CD8-positive, alpha-beta memory T cell (primary cell): ENCODE measurements at regions of chrX and their contacts with region 1.

Region 1: DNA sequence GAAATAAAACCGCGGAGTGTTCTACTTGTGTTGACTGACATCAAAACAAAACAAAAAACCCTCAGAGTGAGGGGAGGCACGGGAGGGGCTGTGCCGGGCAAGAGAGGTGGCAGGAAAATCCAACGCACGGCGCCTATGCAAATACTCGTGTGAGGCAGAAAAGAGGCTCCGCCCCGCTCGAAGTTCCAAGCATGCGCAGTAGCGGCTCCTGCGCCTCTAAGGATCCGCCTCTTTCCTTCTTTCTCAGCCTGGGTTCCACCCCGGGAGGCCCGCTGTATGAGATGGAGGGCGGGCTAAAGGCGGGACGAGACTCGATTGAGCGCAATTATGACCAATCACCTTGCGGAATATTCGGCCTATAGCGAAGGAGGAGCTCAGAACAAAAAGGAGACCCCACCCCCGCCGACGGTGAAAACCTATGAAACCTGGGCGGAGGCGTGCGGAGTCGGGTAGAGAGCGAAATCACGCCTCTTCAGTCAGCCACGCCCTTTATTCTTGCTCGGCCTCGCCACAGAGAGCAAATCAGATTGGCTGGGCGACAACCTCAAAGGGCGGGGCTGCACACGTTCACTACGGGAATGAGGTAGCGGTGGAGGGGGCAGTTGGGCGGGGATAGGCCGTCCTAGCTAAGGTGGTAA is 720 bp upstream of the CDK16 start:
- DNase-seq: peak; percentile 90 to 100 (median 98)
- H3K4me3 ChIP-seq: peak overlapping the region; percentile 78
- H3K4me3 Mint-ChIP-seq: peak overlapping the region; percentile 89 to 97 (median 96)
- H3K27ac ChIP-seq: peak overlapping the region; percentile 93
- H3K27ac Mint-ChIP-seq: peak overlapping the region; percentile 96 to 100 (median 99)
- H3K4me1 ChIP-seq: peaks cover 20% of the 10 kb centered on the region
- H3K4me1 Mint-ChIP-seq: peaks cover 37 to 48% (median 37%) of the 10 kb centered on the region in 3 donors
- H3K27me3 ChIP-seq: no peaks in the 10 kb centered on the region
- H3K27me3 Mint-ChIP-seq: peaks cover 0 to 2% of the 10 kb centered on the region in 2 donors

Region 2: GRCh38 chrX:47097018-47097417 is 120.7 kb before region 1 on chrX:
- CTCF ChIA-PET with region 1: no interaction called
- POLR2A ChIA-PET with region 1: no interaction called
- DNase-seq: no peak
- H3K4me3 ChIP-seq: no peak overlapping the region
- H3K4me3 Mint-ChIP-seq: no peak overlapping the region
- H3K27ac ChIP-seq: no peak overlapping the region
- H3K27ac Mint-ChIP-seq: no peak overlapping the region
- H3K4me1 ChIP-seq: no peaks in the 10 kb centered on the region
- H3K4me1 Mint-ChIP-seq: peaks cover 0 to 4% (median 0%) of the 10 kb centered on the region in 3 donors
- H3K27me3 ChIP-seq: no peaks in the 10 kb centered on the region
- H3K27me3 Mint-ChIP-seq: peaks cover 0 to 21% of the 10 kb centered on the region in 2 donors

Region 3: DNA sequence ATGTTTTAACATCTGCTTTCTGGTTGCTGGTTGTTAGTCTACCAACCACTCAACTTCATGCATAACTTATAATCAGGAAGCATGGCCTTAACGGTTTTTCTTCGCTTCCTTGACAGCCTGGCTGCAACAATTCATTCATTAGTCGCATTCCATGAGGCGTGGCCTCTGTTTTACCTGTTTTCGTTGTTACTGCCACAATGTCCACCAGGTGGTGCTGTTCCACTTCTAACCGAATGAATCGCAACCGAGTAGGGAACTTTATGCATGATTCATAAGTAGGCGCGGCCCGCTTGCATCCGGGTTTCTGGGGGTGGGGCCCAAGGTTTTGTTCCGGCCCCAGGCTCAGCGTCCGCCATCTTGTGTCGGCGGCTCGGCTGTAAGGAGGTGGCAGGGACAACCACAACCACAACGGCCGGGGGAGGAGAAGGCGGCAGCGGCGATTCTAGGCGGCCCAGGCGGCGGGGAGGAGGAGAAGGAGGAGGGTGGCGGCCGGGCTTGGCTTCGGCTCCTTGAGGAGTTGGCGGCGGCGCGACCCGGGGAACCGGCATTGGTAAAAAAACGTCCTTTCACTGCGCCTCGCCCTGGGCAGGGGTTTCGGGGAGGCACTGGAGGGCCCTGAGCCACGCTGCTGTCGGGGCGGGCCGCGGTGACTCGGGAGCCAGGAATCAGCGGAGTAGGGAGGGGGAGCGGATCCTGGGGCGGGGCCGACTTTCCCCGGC is 24.1 kb before region 1 on chrX and contains the start of gene UBA1:
- CTCF ChIA-PET with region 1: interaction called, 3 read pairs
- POLR2A ChIA-PET with region 1: interaction called, 11 read pairs
- DNase-seq: peak; percentile 84 to 97 (median 95)
- H3K4me3 ChIP-seq: peak within 1 kb of the TSS; percentile 74
- H3K4me3 Mint-ChIP-seq: peak within 1 kb of the TSS; percentile 91 to 100 (median 98)
- H3K27ac ChIP-seq: peak within 1 kb of the TSS; percentile 84
- H3K27ac Mint-ChIP-seq: peak within 1 kb of the TSS; percentile 88 to 100 (median 99)
- H3K4me1 ChIP-seq: peaks cover 46% of the 10 kb centered on the region
- H3K4me1 Mint-ChIP-seq: peaks cover 62 to 77% (median 65%) of the 10 kb centered on the region in 3 donors
- H3K27me3 ChIP-seq: no peaks in the 10 kb centered on the region
- H3K27me3 Mint-ChIP-seq: no peaks in the 10 kb centered on the region
- total RNA-seq, gene UBA1: 225 to 234 TPM

Region 4: DNA sequence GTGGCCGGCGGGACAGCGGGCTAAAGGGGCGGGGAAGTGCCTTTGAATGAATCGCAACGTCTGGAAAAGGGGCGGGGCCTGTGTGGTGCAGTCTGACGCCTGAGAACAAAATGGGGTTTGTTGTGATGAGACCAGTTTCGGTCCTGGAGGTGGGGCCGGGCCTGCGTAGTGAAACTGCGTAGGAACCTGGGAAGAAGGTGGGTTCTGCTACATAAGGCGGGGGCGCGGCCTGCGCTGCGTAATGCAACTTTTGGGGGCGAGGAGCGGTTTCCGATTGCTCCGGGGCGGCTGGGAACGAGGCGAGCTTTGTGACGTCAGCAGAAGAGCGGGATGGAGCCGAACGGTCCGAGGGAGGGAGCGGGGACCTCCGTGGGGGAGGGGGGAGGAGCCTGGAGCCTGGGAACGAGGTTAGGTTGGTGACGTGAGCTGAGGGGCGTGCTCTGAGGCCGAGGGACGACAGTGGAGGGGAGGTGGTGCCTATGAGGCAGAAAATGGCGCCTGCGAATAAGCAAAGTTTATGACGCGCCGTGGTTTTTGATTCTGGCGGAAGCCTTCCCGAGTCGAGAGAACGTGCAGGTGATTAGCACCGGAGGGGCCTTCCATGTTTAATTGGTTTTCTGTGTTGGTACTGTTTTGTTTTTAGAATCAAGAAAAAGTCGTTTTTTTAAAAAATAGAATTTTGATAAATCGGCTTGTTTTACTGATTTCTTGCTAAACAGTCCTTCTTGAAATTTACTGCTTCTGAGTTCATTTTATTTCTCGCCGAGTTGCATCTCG is 15.8 kb after region 1 on chrX:
- CTCF ChIA-PET with region 1: no interaction called
- POLR2A ChIA-PET with region 1: interaction called, 65 read pairs
- DNase-seq: peak; percentile 88 to 98 (median 96)
- H3K4me3 ChIP-seq: peak overlapping the region; percentile 66
- H3K4me3 Mint-ChIP-seq: peak overlapping the region; percentile 92 to 99 (median 93)
- H3K27ac ChIP-seq: peak overlapping the region; percentile 96
- H3K27ac Mint-ChIP-seq: peak overlapping the region; percentile 91 to 99 (median 98)
- H3K4me1 ChIP-seq: peaks cover 25% of the 10 kb centered on the region
- H3K4me1 Mint-ChIP-seq: peaks cover 38 to 46% (median 40%) of the 10 kb centered on the region in 3 donors
- H3K27me3 ChIP-seq: no peaks in the 10 kb centered on the region
- H3K27me3 Mint-ChIP-seq: peaks cover 0 to 7% of the 10 kb centered on the region in 2 donors